OCI-LY7 (cell line): ENCODE measurements at regions of chr3 and their contacts with region 1.

Region 1: DNA sequence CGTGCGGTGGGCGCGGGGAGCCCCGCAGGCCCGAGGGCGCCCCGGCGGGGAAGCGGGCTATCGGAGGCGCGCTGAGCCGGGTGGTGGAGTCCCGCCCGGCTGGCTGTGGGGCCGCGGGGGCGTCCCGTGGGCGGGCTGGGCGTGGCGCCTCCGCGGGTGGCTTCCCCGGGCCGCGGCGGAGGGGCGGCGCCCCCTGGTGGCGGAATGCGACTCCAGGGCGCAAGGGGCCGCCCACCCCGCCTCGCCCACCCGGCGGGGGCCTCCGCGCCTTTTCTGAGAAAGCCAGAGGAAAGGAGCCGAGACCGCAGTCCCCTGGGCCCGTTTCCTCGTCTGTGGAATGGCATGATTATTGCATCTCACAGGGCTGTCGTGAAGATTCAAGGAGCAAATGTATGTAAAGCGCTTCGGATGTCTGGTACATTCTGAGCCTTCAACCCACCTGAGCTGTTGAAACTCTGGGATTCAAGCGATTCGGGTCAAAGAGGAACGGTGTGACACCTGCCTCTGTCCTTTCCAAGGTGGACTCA is 31.9 kb upstream of the RAB6B start:
- DNase-seq: peak; percentile 45
- H3K4me3 ChIP-seq: no peak overlapping the region
- H3K27ac ChIP-seq: no peak overlapping the region
- H3K4me1 ChIP-seq: no peaks in the 10 kb centered on the region
- CTCF ChIP-seq: peak; percentile 72

Region 2: GRCh38 chr3:132730891-132731580 is 1196.6 kb before region 1 on chr3:
- CTCF ChIA-PET with region 1: no interaction called
- POLR2A ChIA-PET with region 1: no interaction called
- intact Hi-C with region 1: loop called (anchors 10 kb)
- DNase-seq: peak; percentile 39
- H3K4me3 ChIP-seq: no peak overlapping the region
- H3K27ac ChIP-seq: no peak overlapping the region
- H3K4me1 ChIP-seq: no peaks in the 10 kb centered on the region
- CTCF ChIP-seq: peak; percentile 76

Region 3: DNA sequence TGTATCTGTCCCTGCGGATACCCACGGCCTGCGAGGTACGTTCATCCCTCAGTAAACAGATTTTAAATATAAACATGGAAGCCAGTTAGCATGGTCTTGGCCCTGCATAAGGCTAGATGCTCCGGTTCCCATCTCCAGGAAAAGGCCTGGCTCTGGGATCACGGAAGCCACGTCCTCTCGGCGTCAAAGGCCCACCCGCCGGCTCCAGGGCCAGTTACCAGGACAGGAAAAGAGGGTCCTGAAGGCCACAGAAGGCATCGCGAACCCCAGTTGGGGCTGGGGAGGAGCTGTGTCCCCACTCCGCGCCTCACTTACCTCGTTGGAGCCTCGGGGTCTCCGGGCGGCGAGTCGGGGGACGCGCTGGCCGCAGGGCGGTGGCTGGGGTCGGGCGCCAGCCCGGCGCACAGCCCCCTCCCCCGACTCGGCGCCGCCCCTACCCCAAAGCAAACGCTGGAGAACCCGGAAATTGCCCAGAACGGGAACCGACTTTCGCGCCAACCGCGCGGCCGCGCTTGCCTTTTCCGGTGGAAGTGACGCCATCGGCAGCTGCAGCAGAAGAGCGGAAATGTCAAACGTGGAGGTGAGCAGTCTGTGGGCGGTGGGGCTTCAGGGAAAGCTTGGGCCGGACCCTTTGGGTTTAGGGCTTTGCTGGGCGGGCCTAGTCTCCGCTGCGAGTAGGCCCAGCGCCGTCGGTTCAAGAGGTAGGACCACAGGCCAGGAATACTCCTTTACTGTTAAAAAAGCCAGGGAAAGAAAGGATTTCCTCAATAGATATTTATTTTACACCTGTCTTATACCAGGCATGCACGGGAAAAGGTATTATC is 265.9 kb before region 1 on chr3 and contains the start of gene TOPBP1:
- CTCF ChIA-PET with region 1: no interaction called
- POLR2A ChIA-PET with region 1: no interaction called
- intact Hi-C with region 1: loop called (anchors 10 kb)
- DNase-seq: peak; percentile 92
- H3K4me3 ChIP-seq: peak within 1 kb of the TSS; percentile 99
- H3K27ac ChIP-seq: peak within 1 kb of the TSS; percentile 76
- H3K4me1 ChIP-seq: peaks cover 39% of the 10 kb centered on the region
- CTCF ChIP-seq: no peak
- total RNA-seq, gene TOPBP1: 139 and 167 TPM in 2 replicates